CD4-positive, alpha-beta T cell (primary cell): ENCODE measurements at regions of chr11 and their contacts with region 1.

Region 1: DNA sequence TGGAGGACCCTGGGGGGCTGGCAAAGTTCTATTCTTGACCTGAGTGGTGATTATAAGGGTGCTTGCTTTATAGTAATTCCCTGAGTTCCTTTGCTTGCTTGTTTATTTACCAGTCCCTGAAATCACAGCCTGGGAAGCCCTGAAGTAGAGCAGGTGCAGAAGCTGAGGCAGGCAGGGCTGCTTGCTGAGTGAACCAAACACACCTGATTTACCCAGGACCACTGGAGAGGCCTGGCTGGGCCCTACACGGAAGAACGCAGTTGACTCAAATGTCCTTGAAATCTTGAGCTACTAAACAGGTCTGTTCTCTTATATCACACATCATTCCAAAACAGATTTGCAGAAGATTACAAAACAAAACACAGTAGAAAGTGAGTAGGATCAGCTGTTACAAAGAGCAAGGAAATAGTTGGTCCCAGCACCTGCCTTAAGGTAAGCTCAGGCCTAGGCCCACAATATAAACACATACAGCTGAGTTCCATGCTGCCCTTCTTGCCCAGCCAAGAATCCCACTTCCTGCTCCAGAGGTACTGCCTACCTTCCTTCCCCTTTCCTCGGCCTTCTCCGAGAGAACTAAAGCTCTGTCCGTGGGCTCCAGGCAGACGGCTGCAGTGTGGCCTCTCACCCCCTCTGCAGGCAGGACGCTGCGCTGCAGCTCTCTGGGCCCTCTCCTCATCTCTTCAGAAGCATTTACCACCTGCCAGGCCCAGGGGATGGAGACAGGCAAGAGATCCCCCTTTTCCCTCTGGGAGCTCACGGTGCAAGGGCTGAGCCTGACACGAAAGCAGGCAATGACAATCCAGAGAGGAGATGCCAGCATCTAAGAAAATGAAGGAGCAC is 46.1 kb upstream of the SCUBE2 start:
- DNase-seq: peak; percentile 36 to 78 (median 62)
- ATAC-seq: peak; percentile 94
- H3K4me3 ChIP-seq: no peak overlapping the region
- H3K4me3 Mint-ChIP-seq: peak overlapping the region; percentile 0
- H3K27ac ChIP-seq: no peak overlapping the region
- H3K27ac Mint-ChIP-seq: peak overlapping the region; percentile 28
- H3K4me1 ChIP-seq: peaks cover 20% of the 10 kb centered on the region
- H3K4me1 Mint-ChIP-seq: peaks cover 15% of the 10 kb centered on the region
- H3K27me3 ChIP-seq: no peaks in the 10 kb centered on the region
- H3K27me3 Mint-ChIP-seq: no peaks in the 10 kb centered on the region
- CTCF ChIP-seq: peak; percentile 96

Region 2: DNA sequence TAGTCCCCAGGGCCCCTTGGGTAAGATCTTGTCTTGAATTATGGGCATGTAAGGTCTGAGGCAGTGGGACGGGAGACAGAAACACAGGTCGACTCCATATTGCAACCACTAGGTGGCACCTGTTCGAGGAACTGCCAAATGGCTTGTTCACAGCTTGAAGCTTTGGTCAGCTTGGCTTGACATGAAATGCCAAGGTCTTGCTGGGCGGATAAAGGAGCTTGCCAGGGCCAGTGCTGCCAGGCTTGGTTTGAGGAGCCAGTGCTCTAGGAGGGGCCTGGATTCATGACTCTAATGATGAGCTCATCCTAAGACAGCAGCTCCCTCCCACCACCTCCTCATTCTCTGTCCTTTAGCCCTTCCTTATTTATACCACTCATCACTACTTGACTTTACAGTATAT is 121.8 kb before region 1 on chr11:
- CTCF ChIA-PET with region 1: interaction called, 25 read pairs
- POLR2A ChIA-PET with region 1: no interaction called
- intact Hi-C with region 1: loop called (anchors 1 to 2 kb)
- DNase-seq: peak; percentile 31 to 81 (median 44)
- ATAC-seq: peak; percentile 84
- H3K4me3 ChIP-seq: no peak overlapping the region
- H3K4me3 Mint-ChIP-seq: no peak overlapping the region
- H3K27ac ChIP-seq: no peak overlapping the region
- H3K27ac Mint-ChIP-seq: no peak overlapping the region
- H3K4me1 ChIP-seq: peaks cover 18% of the 10 kb centered on the region
- H3K4me1 Mint-ChIP-seq: peaks cover 29% of the 10 kb centered on the region
- H3K27me3 ChIP-seq: no peaks in the 10 kb centered on the region
- H3K27me3 Mint-ChIP-seq: peaks cover 5% of the 10 kb centered on the region
- CTCF ChIP-seq: peak; percentile 76